Activated naive CD4-positive, alpha-beta T cell treated with anti-CD3 and anti-CD28 coated beads for 36 hours (primary cell): ENCODE measurements at regions of chr6 and their contacts with region 1.

Region 1: GRCh38 chr6:90008908-90009501 is 114.7 kb downstream of the GJA10 start:
- DNase-seq: peak; percentile 66
- H3K4me3 Mint-ChIP-seq: no peak overlapping the region
- H3K27ac Mint-ChIP-seq: peak overlapping the region; percentile 91
- H3K4me1 Mint-ChIP-seq: peaks cover 58% of the 10 kb centered on the region
- H3K27me3 Mint-ChIP-seq: no peaks in the 10 kb centered on the region

Region 2: DNA sequence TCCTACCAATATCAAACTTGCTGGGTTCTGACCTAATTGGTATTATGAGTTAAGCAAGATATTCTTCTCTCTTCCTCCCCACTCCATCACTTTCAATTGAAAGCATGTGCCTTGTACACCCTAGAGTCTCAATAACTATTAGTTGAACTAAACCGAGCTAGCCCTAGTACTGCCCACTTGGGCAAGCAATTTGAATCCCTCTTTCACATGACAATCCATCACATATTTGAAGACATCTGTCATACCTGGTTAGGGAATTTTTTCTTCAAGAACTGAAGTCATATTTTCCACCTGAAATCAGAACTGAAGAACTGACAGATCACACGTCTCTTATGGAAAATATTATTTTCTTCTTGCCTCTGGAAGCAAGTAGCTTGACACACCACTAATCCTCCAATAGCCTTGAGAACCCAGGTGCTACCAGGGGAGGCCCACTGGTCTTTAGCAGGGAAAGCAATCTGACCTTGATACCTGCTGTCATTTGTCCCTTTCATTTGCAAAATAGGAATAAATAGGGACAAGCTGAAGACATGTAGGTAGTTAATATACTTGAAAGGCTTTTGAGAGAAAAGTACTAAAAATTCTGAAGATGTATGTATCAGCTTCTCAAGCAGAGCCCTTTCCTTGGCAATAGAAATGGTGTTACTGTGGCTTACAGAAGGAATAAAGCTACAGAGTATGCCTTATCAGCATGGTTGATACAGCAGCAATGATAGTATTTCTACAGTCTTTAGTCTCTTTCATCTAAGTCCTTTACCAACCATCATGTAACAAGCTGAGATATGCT is 43.4 kb before region 1 on chr6:
- CTCF ChIA-PET with region 1: no interaction called
- intact Hi-C with region 1: loop called (anchors 1 kb)
- DNase-seq: no peak
- H3K4me3 Mint-ChIP-seq: no peak overlapping the region
- H3K27ac Mint-ChIP-seq: peak overlapping the region; percentile 82
- H3K4me1 Mint-ChIP-seq: peaks cover 76% of the 10 kb centered on the region
- H3K27me3 Mint-ChIP-seq: no peaks in the 10 kb centered on the region

Region 3: DNA sequence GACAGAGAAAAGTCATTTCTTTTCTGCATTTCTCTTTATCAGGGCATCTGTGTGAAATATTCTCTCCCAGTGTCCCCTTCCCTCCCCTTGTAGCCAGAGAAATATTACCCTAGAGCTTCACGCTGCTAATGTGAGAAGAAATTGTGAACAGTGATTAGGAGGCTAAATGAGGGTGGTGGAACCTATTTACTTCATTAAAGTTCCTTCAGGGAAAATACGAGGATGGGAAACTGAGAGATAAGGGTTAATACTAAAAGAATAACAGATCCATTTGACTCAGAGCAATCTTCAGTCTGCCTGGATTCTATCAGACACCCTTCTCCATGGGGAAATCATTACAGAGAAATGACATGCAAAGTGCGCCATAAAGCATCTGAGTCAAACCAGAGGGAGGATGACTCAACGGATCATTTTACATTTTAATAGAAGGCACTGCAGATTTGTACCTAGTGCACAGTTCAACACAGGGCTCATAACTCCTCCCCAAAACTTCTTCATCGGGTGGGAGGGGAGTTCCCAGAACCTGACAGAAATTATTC is 16.6 kb after region 1 on chr6:
- CTCF ChIA-PET with region 1: no interaction called
- intact Hi-C with region 1: loop called (anchors 1 kb)
- DNase-seq: peak; percentile 85
- H3K4me3 Mint-ChIP-seq: peak overlapping the region; percentile 47
- H3K27ac Mint-ChIP-seq: peak overlapping the region; percentile 87
- H3K4me1 Mint-ChIP-seq: peaks cover 93% of the 10 kb centered on the region
- H3K27me3 Mint-ChIP-seq: no peaks in the 10 kb centered on the region

Region 4: GRCh38 chr6:90103056-90103800 is 94.2 kb after region 1 on chr6:
- CTCF ChIA-PET with region 1: interaction called, 3 read pairs
- intact Hi-C with region 1: loop called (anchors 1 kb)
- DNase-seq: peak; percentile 53
- H3K4me3 Mint-ChIP-seq: peak overlapping the region; percentile 45
- H3K27ac Mint-ChIP-seq: peak overlapping the region; percentile 79
- H3K4me1 Mint-ChIP-seq: peaks cover 93% of the 10 kb centered on the region
- H3K27me3 Mint-ChIP-seq: no peaks in the 10 kb centered on the region

Region 5: DNA sequence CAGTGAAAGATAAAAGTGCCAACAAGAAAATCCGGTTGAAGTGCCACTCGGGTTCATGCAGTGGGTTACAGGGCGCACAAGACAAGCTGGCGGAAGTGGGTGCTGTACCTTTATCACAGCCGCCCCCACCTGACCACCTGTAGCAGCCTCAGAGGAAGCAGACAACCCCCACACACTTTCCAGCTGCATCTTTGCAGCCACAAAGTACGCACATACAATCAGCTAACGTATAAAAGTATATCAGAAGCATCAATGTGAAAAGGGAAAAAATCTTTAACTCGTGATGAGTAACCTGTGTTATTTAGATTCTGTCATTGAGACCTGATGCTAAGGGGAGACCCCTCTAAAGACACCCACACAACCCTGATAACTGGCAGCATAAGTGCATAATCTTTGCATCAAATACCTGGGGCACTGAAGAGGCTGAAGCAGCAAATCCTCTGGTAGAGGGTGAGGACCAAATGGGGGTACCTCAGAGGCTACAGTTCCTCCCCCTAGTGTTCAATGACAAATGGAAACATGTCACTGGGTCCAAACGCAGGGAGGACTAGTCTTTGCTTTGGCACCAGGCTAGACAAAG is 265.5 kb after region 1 on chr6:
- CTCF ChIA-PET with region 1: no interaction called
- intact Hi-C with region 1: loop called (anchors 5 kb)
- DNase-seq: peak; percentile 96
- H3K4me3 Mint-ChIP-seq: peak overlapping the region; percentile 36
- H3K27ac Mint-ChIP-seq: peak overlapping the region; percentile 97
- H3K4me1 Mint-ChIP-seq: peaks cover 91% of the 10 kb centered on the region
- H3K27me3 Mint-ChIP-seq: no peaks in the 10 kb centered on the region

Region 6: DNA sequence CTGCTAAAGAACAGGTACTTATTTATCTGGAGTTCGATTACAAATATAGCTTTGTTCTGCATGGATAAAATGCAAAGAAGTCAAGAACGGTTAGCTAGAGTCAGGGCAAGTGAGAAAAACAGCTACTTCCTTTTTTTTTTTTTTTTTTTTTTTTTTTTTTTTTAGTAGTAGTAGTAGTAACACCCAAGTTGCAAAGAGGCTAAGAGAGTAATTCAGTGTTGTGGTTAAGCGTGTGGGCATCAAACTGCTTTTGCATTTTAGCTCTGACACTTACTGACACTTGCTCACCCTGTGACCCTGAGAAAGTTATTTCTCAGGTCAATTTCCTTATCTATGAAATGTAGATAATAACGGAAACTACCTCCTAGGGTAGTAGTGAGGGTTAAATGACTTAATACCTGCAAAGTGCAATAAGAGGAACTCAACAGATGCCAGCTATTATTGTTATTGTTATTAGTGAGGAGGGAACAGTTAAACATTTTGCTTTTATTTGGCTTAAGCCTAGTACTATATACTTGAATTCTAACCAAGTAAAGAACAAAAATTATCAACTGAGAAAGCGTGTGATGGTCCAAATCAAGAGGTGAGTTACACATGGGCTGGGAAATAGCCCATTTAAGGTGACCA is 374.3 kb after region 1 on chr6:
- CTCF ChIA-PET with region 1: no interaction called
- intact Hi-C with region 1: no loop called
- DNase-seq: peak; percentile 65
- H3K4me3 Mint-ChIP-seq: no peak overlapping the region
- H3K27ac Mint-ChIP-seq: no peak overlapping the region
- H3K4me1 Mint-ChIP-seq: peaks cover 44% of the 10 kb centered on the region
- H3K27me3 Mint-ChIP-seq: no peaks in the 10 kb centered on the region